ENCODE measurements at regions of chr17 and their contacts with region 1.

Region 1: GRCh38 chr17:29931231-29931932 is 1.4 kb upstream of the SSH2 start:
- DNase-seq: peak; percentile 44
- ATAC-seq: peak; percentile 77
- H3K4me3 Mint-ChIP-seq: no peak overlapping the region
- H3K27ac Mint-ChIP-seq: no peak overlapping the region
- H3K4me1 Mint-ChIP-seq: peaks cover 33% of the 10 kb centered on the region
- H3K27me3 Mint-ChIP-seq: no peaks in the 10 kb centered on the region
- CTCF ChIP-seq: no peak

Region 2: DNA sequence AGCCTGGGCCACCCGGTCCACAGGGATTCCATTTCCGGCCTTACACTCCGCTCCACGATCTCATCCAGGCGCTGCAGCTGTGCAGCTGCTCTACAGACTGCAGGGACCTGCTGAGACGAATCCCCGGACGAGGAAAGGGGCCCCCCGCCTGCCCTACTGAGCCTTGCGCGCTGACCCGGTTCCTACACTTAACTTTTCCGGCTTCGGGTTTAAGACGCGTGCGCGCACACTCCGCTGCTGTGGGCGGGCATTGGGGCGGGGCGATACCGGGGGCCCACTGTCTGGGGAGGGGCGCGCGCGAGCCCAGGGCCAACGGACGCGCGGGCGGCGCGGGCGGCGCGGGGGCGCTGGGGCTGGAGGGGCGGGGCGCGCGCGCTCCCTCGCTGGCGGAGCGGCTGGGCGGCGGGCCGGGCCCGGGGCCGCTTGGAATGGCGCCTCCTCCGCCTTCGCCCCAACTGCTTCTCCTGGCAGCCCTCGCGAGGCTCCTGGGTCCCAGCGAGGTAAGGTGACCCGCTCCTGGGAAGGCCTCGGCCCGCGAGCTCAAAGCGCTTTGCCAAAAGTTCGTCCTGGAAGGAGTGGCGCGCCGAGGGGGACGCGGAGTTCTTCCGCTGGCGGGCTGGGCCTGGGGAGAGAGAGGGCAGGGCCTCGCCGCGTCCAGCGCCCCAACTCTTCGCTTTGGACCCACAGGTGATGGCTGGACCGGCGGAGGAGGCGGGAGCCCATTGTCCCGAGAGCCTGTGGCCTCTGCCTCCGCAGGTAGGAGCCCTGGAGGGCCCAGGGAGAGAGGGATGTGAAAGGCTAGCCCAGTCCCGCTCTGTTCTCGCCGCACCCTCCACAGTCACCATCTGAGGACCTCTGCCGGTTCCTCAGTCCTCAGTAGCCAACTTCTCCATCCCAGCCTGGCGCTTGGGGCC is 362.8 kb before region 1 on chr17 and contains the start of gene TP53I13:
- CTCF ChIA-PET with region 1: interaction called, 3 read pairs
- POLR2A ChIA-PET with region 1: interaction called, 3 read pairs
- intact Hi-C with region 1: loop called (anchors 5 kb)
- DNase-seq: peak; percentile 83
- ATAC-seq: peak; percentile 65
- H3K4me3 Mint-ChIP-seq: peak within 1 kb of the TSS; percentile 97
- H3K27ac Mint-ChIP-seq: peak within 1 kb of the TSS; percentile 97
- H3K4me1 Mint-ChIP-seq: peaks cover 32% of the 10 kb centered on the region
- H3K27me3 Mint-ChIP-seq: no peaks in the 10 kb centered on the region
- CTCF ChIP-seq: no peak
- total RNA-seq, gene TP53I13: 65.1 and 71.2 TPM in 2 replicates

Region 3: DNA sequence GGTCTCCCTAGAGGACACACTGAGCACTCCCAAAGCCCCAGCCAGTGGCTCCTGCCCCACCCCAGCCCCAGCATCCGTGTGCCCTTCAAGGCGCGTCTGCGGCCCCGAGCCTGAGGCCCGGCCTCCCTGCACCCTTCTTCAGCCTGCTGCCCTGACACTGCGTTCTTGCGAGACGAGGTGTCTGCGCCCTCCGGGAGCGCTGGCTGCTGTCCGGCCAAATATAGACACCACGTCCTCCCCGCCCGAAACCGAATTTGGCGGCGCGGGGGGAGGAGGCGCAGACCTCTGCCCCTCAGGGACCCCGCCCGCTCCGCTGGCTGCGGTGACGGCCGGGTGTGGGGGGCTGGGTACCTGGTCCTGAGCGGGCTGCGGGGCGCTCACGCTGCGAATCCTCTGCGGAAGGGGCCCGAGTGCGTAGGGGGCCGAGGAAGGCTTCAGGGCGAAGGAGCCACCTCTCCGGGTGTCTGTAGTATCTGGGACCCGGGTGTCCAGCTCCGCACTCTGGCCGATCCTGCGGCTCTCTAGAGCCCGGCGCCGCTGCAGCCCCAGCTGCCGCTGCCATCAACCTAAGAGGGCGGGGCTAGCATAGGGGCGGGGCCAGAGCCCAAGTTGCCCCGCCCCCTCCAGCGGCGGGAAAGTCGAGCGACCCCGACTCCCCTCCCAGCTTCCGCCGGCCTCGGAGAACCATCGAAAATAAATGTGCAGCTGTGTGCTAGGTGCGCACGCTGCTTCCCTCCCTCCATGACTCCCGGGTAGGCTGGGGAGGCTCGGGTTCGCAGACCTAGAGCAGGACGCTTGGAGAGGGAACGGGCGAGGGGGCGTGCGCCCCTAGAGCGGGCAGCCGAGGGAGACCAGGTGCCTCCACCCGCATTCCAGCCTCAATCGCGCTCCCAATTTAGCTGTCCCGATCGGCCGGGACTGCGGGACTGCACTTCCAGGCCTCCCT is 308.8 kb before region 1 on chr17 and contains the start of gene CORO6:
- CTCF ChIA-PET with region 1: interaction called, 23 read pairs
- POLR2A ChIA-PET with region 1: interaction called, 18 read pairs
- intact Hi-C with region 1: loop called (anchors 1 kb)
- DNase-seq: peak; percentile 74
- ATAC-seq: peak; percentile 76
- H3K4me3 Mint-ChIP-seq: peak within 1 kb of the TSS; percentile 80
- H3K27ac Mint-ChIP-seq: peak within 1 kb of the TSS; percentile 64
- H3K4me1 Mint-ChIP-seq: peaks cover 37% of the 10 kb centered on the region
- H3K27me3 Mint-ChIP-seq: no peaks in the 10 kb centered on the region
- CTCF ChIP-seq: no peak
- total RNA-seq, gene CORO6: 4.1 and 5.1 TPM in 2 replicates

Region 4: GRCh38 chr17:29713626-29714025 is 217.8 kb before region 1 on chr17:
- CTCF ChIA-PET with region 1: no interaction called
- POLR2A ChIA-PET with region 1: no interaction called
- intact Hi-C with region 1: no loop called
- DNase-seq: no peak
- ATAC-seq: peak; percentile 57
- H3K4me3 Mint-ChIP-seq: peak overlapping the region; percentile 50
- H3K27ac Mint-ChIP-seq: peak overlapping the region; percentile 59
- H3K4me1 Mint-ChIP-seq: peaks cover 97% of the 10 kb centered on the region
- H3K27me3 Mint-ChIP-seq: no peaks in the 10 kb centered on the region
- CTCF ChIP-seq: no peak

Region 5: GRCh38 chr17:29807520-29808351 is 123.6 kb before region 1 on chr17:
- CTCF ChIA-PET with region 1: interaction called, 241 read pairs
- POLR2A ChIA-PET with region 1: interaction called, 112 read pairs
- intact Hi-C with region 1: loop called (anchors 1 kb)
- DNase-seq: peak; percentile 23
- ATAC-seq: peak; percentile 83
- H3K4me3 Mint-ChIP-seq: peak overlapping the region; percentile 49
- H3K27ac Mint-ChIP-seq: no peak overlapping the region
- H3K4me1 Mint-ChIP-seq: peaks cover 29% of the 10 kb centered on the region
- H3K27me3 Mint-ChIP-seq: no peaks in the 10 kb centered on the region
- CTCF ChIP-seq: peak; percentile 49

Region 6: DNA sequence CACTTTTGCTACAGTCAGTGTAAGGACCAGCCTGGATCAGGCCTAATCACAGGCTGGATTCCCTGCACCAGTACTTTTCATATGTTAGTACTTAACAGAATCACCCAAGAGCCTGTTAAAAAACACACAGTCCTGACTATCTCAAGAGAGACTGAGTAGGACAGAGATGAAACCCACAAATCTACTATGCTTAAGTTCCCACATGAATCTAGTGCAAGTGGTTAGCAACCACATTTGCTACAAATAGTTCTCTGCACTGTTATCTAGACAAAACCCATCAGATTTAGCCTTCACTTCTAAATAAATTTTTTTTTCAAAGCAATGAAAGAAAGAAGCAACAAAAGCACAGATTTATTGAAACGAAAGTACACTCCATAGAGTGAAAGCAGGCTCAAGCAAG is 40.3 kb before region 1 on chr17:
- CTCF ChIA-PET with region 1: interaction called, 9 read pairs
- POLR2A ChIA-PET with region 1: interaction called, 3 read pairs
- intact Hi-C with region 1: loop called (anchors 5 kb)
- DNase-seq: no peak
- ATAC-seq: no peak
- H3K4me3 Mint-ChIP-seq: no peak overlapping the region
- H3K27ac Mint-ChIP-seq: no peak overlapping the region
- H3K4me1 Mint-ChIP-seq: peaks cover 24% of the 10 kb centered on the region
- H3K27me3 Mint-ChIP-seq: no peaks in the 10 kb centered on the region
- CTCF ChIP-seq: no peak

Region 7: DNA sequence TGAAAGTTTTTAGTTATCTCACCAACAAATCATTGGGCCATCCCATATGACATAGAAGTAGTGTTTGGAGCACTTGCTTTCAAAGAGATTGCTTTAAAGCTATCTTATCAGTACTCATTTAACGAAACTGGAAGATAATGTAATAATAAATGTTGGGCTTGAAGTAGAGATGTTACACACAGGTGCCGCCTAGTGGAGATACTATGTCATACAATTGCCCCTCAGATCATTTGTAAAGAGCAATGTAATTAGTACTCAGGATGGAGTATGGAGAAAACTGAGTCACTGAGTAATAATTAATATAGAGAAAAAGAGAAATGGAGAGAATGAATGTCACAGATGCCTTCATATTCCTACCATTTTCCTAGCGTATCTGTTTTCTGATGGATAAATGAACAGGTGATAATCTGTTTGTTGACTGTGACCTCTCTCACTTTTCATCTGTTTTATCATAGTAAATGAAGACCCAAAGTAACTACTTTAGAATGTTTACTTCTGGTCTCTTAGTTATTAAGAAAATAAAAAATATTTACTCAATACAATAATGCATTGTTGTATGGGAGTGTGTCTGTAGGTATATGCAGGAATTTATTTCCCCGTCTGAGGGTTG is 90.4 kb after region 1 on chr17:
- CTCF ChIA-PET with region 1: interaction called, 15 read pairs
- POLR2A ChIA-PET with region 1: interaction called, 3 read pairs
- intact Hi-C with region 1: loop called (anchors 1 kb)
- DNase-seq: no peak
- ATAC-seq: peak; percentile 66
- H3K4me3 Mint-ChIP-seq: no peak overlapping the region
- H3K27ac Mint-ChIP-seq: no peak overlapping the region
- H3K4me1 Mint-ChIP-seq: no peaks in the 10 kb centered on the region
- H3K27me3 Mint-ChIP-seq: no peaks in the 10 kb centered on the region
- CTCF ChIP-seq: peak; percentile 83